ENCODE measurements at regions of chr20 and their contacts with region 1.

Region 1: DNA sequence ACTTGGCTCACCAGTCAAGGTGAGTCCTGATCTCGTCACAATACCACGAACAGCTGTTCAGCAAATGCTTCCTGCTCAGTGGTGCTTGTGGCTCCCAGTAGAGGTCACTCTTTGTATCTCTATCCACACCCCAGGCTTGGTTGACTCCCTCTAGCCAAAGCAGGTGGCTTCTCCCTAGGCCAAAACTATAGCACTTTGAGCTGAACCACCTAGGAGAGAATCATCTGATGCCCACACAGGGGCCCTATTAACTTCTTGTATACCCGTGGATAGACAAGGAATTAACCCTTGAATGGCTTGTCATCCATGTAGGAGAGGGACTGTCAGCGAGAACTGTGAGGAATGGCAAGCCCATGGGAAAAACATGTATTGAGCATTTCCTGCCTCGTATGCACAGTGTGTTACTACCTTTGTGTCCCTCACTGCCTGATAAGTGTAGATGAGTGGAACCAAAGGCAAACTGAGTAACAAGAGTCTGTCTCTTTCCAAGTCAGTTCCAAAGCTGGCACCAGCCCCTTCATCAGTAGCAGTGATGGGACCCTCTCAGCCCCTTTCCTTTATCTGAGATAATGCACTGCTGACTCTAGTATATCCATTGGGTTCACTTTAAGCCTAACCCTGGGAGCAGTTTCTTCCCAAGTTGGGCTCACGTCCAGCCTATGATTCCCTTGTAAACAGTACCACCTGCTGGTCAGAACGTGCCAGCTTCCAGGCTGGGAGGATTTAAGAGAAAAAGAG is 42.5 kb downstream of the EIF2S2 start:
- DNase-seq: peak; percentile 88

Region 2: GRCh38 chr20:33862709-33863403 is 206.7 kb before region 1 on chr20:
- intact Hi-C with region 1: loop called (anchors 2 to 5 kb)
- DNase-seq: peak; percentile 85

Region 3: GRCh38 chr20:33933469-33933909 is 136.0 kb before region 1 on chr20:
- intact Hi-C with region 1: loop called in 1 of 2 experiments (anchors 5 kb)
- DNase-seq: no peak

Region 4: DNA sequence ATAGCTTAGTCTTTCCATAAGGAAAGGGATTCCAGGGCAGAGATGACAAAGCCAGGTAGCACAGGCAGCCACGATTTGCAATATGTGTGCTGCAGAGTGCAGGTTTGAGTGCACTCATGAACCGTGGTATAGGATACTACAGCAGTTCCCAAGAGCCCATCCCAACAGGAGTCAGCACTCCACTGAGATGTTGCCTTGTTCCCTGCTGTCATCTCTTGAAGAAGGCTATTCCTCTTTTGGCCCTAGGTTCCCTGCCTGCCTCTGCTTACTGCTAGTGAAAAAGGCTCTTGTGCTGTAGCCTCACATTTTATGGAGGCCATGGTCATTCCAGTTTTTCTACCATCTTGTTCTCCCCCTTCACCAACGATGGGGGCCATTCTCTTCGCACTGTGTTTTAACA is 35.6 kb before region 1 on chr20:
- intact Hi-C with region 1: no loop called
- DNase-seq: no peak

Region 5: DNA sequence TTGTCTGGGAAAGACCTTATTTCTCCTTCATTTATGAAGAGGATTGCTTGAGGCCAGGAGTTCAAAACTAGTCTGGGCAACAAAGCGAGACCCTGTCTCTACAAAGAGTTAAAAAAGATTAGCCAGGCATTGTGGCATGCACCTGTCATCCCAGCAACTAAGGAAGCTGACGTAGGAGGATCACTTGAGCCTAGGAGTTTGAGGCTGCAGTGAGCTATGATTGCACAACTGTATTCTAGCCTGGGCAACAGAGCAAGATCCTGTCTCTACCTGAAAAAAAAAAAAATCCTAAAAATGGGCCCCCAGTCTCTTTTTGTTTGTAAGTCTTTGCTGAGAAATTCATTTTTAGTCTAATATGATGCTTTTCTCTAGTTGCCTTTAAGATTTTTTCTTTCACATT is 71.8 kb after region 1 on chr20:
- intact Hi-C with region 1: no loop called
- DNase-seq: no peak

Measured in posterior vena cava (tissue), 2 donors.